Panc1 (cell line): ENCODE measurements at regions of chr1 and their contacts with region 1.

Region 1: DNA sequence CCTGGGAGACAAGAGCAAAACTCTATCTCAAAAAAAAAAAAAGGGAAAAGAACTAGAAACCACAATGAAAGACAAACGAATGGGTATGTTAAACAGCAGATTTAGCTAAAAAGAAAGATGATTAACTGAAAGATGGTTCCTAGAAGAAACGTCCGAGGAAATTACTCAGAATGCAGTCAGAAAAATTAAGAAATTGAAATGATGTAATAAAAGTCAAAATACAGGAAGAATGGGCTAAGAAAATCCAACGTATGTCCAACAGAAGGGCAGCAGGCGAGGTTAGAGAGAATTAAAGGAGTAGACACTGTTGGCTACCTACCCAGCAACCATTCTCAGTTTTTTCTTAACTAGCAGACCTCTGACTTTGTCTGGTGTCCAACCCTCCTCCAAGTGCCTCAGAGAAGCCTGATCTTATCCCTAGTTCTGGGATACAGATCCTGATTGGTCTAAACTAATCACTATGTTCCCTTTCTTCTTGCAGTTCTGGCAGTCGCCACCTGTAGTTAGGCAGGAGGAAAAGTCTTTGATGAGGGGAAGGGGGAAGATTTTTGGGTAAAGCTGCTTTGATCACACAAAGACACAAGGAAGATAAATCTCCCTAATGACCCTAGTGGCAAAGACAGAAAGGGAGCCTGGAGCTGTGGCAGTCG is 25.7 kb downstream of the GPR161 start:
- DNase-seq: no peak
- ATAC-seq: no peak
- H3K4me3 ChIP-seq: no peak overlapping the region
- H3K27ac ChIP-seq: no peak overlapping the region
- H3K4me1 ChIP-seq: no peaks in the 10 kb centered on the region
- H3K27me3 ChIP-seq: 0 out of 2 replicates have a peak, but pooled peaks cover 2% of the 10 kb centered on the region
- CTCF ChIP-seq: no peak

Region 2: GRCh38 chr1:168202941-168203654 is 92.1 kb after region 1 on chr1:
- CTCF ChIA-PET with region 1: no interaction called
- POLR2A ChIA-PET with region 1: interaction called, 12 read pairs
- in situ Hi-C with region 1: no loop called
- intact Hi-C with region 1: no loop called
- DNase-seq: no peak
- ATAC-seq: no peak
- H3K4me3 ChIP-seq: no peak overlapping the region
- H3K27ac ChIP-seq: no peak overlapping the region
- H3K4me1 ChIP-seq: no peaks in the 10 kb centered on the region
- H3K27me3 ChIP-seq: no peaks in the 10 kb centered on the region
- CTCF ChIP-seq: no peak

Region 3: DNA sequence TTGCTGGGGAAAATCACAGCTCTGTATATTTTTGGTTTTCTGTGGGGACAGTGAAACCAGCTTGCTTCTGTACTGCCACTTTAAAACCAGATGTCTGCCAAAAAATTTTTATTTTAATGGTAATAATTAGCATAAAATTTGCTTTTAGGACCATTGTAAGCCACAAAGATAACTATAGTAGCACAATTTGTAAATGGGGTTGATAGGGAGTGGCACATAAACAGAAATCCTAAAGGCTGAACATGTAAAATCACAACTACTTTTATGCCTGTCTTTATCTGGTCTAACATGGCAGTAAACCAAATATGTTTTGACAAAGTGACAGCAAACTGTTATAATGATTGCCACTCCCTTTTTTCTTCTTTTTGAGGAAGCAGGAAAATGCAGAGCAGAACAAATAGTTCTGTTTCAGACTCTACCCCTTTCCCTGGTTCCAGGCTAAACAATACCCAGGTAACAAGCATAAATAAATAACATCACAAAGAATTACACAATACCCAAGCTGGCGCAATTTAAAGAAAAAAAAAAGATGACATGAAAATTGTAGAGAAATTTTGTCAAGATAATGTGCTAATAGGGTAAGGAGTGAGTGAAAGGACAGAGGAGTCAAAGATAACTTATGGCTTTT is 1340.3 kb after region 1 on chr1:
- CTCF ChIA-PET with region 1: no interaction called
- POLR2A ChIA-PET with region 1: no interaction called
- in situ Hi-C with region 1: no loop called
- intact Hi-C with region 1: no loop called
- DNase-seq: no peak
- ATAC-seq: no peak
- H3K4me3 ChIP-seq: no peak overlapping the region
- H3K27ac ChIP-seq: no peak overlapping the region
- H3K4me1 ChIP-seq: no peaks in the 10 kb centered on the region
- H3K27me3 ChIP-seq: no peaks in the 10 kb centered on the region; the same call in 1 of the 2 replicates
- CTCF ChIP-seq: no peak